Endothelial cell of umbilical vein (primary cell): ENCODE measurements at regions of chr3 and their contacts with region 1.

Region 1: DNA sequence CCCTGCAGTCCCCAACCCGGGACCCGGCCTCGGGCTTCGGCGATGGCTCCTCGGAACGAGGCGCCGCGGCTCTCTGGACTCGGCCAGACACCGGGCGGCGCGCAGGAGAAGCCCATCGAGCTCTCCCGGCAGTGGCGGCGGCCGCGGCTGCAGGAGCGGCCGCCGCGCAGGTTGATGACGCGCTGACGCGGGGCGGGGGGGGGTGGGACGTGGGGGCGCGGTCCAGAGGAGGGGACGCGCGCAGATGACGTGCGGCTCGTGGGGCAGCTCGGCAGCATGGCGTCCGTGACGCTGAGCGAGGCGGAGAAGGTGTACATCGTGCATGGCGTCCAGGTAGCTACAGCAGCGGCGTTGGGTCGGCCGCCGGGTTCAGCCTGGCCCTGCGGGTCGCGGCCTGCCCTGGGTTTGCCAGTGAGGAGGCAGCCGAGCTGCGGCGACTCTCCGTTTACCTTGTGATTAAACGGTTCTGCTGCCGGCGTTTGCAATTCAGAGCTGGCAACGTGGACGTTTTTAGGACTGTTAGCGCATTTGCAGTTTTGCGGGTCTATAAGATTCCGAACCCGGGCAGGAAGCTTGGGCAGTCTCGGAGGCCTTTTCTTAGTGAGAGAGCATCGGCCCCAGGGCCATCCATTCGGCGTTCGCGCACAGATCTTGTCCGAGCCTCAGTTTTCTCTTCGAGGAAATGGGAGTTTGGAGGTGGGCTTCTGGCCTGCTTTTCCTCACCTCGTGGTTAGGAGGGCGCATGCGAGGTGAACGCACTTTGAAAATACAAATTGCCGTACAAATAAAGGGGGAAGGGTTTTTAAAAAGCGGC is at the starts of genes EXOSC7 and ZDHHC3:
- DNase-seq: peak; percentile 85
- H3K4me3 ChIP-seq: peak within 1 kb of the TSS; percentile 86 to 99 (median 97)
- H3K27ac ChIP-seq: peak within 1 kb of the TSS; percentile 64
- H3K4me1 ChIP-seq: peaks cover 13% of the 10 kb centered on the region
- H3K27me3 ChIP-seq: no peaks in the 10 kb centered on the region
- CTCF ChIP-seq: no peak
- POLR2A ChIP-seq: peak; percentile 70
- total RNA-seq, gene EXOSC7: 44.5 and 46.2 TPM in 2 replicates
- total RNA-seq, gene ZDHHC3: 62.4 and 62.7 TPM in 2 replicates

Region 2: GRCh38 chr3:44529927-44530326 is 446.3 kb before region 1 on chr3:
- CTCF ChIA-PET with region 1: no interaction called
- POLR2A ChIA-PET with region 1: no interaction called
- dilution Hi-C with region 1: no loop called
- intact Hi-C with region 1: loop called (anchors 5 kb)
- DNase-seq: peak; percentile 8
- H3K4me3 ChIP-seq: no peak overlapping the region
- H3K27ac ChIP-seq: no peak overlapping the region
- H3K4me1 ChIP-seq: no peaks in the 10 kb centered on the region
- H3K27me3 ChIP-seq: no peaks in the 10 kb centered on the region
- CTCF ChIP-seq: peak; percentile 21 to 23
- POLR2A ChIP-seq: no peak

Region 3: GRCh38 chr3:44861412-44862220 is 114.6 kb before region 1 on chr3 and contains the start of gene TMEM42:
- CTCF ChIA-PET with region 1: no interaction called
- POLR2A ChIA-PET with region 1: no interaction called
- dilution Hi-C with region 1: no loop called
- intact Hi-C with region 1: loop called (anchors 1 kb)
- DNase-seq: peak; percentile 95
- H3K4me3 ChIP-seq: peak within 1 kb of the TSS; percentile 66 to 88 (median 72)
- H3K27ac ChIP-seq: peak within 1 kb of the TSS; percentile 71
- H3K4me1 ChIP-seq: peaks cover 7% of the 10 kb centered on the region
- H3K27me3 ChIP-seq: no peaks in the 10 kb centered on the region
- CTCF ChIP-seq: peak in 1 of 2 donors; percentile 40
- POLR2A ChIP-seq: peak; percentile 86
- total RNA-seq, gene TMEM42: 10.6 and 13.6 TPM in 2 replicates

Region 4: DNA sequence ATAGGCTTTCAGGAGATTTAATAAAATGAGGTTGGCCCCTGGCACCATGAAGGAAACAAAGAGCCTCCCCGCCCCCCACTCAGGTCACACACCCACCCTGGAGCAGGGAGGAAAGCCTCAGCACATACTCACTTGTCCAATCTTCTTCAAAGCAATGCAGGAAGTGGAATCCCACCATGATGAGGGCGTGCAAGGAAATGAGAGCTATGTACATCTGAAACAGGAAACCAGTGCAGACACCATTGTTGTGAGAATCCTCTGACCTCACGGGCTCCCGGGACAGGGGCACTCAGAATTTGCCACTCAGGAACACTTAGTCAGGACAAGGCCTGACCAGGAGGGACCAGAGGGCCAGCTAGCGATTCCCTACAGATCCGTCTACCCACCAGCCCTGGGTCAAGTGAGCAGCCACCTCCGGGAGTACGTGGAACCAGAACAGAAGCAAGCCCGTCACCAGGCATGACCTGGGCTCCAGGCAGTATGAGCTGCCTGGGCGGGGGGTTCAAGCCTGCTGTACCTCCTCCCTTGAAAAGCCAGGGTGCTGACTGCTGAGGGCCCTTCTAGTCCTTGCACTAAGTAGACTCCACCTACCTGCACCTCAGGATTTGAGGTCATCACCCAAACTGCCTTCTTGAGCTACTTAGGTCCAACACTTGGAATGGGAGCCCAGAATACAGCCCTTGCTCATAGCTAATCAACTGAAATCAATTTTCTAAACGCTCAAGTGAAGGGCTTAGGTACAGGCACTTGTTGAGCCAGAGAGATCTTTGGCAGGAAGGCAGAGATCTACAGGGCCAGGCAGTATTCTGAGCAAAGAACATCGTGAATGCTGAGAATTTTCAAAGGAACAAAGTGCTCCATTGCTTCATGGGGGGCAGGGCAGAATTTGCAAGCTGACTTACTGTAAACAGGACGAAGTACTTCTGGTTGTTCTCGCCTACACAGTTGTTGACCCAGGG is 42.9 kb before region 1 on chr3:
- CTCF ChIA-PET with region 1: interaction called, 5 read pairs
- POLR2A ChIA-PET with region 1: no interaction called
- dilution Hi-C with region 1: no loop called
- intact Hi-C with region 1: loop called (anchors 2 kb)
- DNase-seq: peak; percentile 9
- H3K4me3 ChIP-seq: no peak overlapping the region
- H3K27ac ChIP-seq: peak overlapping the region; percentile 65
- H3K4me1 ChIP-seq: peaks cover 14% of the 10 kb centered on the region
- H3K27me3 ChIP-seq: no peaks in the 10 kb centered on the region
- CTCF ChIP-seq: no peak
- POLR2A ChIP-seq: no peak

Region 5: DNA sequence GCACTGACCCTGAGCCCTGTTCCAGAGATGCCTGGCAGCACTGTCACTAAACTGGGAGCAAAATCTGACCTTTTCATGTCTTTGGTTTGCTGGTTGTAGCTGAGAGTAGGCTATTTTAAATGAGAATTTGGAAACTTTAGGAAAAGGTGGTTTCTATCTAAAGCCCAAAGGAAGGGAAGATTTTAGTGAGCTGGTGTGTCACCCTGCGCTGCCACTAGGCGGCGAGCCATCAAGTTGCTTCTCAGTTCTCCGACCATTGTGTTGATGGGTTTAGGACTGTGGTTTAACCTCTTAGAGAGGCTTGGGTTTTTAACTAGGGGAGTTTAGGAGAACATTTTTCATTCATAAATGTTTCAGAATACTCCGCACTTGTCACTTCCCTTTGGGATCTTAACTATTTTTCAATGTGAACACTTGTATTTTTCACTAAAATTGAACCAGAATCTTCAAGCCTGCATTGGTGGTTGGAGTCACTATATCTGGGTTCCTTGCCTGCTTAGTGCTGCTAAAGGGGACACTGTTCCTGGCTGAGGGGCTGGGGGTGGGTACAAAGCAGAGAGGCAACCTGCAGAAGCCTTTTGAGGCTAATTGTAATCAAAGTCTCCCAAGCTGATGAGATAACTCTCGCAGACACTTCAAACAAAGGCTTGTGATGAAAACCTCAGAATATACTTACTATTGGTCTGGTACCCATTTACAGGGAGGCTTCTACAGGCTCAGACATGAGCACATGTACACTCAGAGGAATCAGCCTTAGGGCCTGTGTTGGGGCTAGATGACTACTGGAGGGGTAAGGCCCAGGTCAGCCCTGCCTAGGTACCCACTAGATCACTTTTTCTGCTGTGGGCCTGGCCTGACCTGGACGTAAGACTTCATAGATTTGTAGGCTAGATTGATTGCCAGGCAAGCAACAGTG is 16.6 kb after region 1 on chr3:
- CTCF ChIA-PET with region 1: interaction called, 18 read pairs
- POLR2A ChIA-PET with region 1: interaction called, 3 read pairs
- dilution Hi-C with region 1: no loop called
- intact Hi-C with region 1: no loop called
- DNase-seq: no peak
- H3K4me3 ChIP-seq: no peak overlapping the region
- H3K27ac ChIP-seq: no peak overlapping the region
- H3K4me1 ChIP-seq: peaks cover 7% of the 10 kb centered on the region
- H3K27me3 ChIP-seq: no peaks in the 10 kb centered on the region
- CTCF ChIP-seq: peak; percentile 78 to 79
- POLR2A ChIP-seq: no peak